ENCODE measurements at regions of chr6 and their contacts with region 1.

Region 1: GRCh38 chr6:16854986-16855385 is 93.7 kb upstream of the ATXN1 start:
- DNase-seq: no peak
- H3K4me3 ChIP-seq: no peak overlapping the region
- H3K4me3 Mint-ChIP-seq: no peak overlapping the region
- H3K27ac ChIP-seq: no peak overlapping the region
- H3K27ac Mint-ChIP-seq: no peak overlapping the region
- H3K4me1 ChIP-seq: peaks cover 30 to 36% of the 10 kb centered on the region in 2 donors
- H3K4me1 Mint-ChIP-seq: peaks cover 37% of the 10 kb centered on the region
- H3K27me3 ChIP-seq: no peaks in the 10 kb centered on the region
- H3K27me3 Mint-ChIP-seq: peaks cover 0 to 2% (median 0%) of the 10 kb centered on the region in 3 donors
- CTCF ChIP-seq: no peak

Region 2: DNA sequence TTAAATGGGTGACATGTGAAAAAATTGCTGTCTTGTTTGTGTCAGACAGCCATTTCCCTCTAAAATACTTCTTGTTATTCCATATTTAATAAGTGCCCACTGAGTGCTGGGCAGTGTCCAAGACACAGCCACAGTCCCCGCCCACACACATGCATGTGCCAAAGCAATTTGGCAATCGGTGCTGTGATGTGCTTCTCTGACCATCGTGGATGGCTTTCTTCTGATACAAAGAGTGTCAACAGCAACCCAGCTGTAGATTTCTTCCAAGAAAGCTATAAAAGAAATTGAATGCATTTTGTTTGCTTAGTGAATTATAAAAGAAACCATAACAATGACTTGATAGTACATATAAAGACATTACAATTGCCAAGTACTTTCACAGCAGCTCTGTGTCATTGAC is 46.8 kb after region 1 on chr6:
- intact Hi-C with region 1: loop called in 1 of 2 experiments (anchors 10 kb)
- DNase-seq: peak; percentile 14 to 59 (median 32)
- H3K4me3 ChIP-seq: peak overlapping the region in 1 of 3 experiments; percentile 18
- H3K4me3 Mint-ChIP-seq: no peak overlapping the region
- H3K27ac ChIP-seq: peak overlapping the region in 1 of 2 donors; percentile 28
- H3K27ac Mint-ChIP-seq: peak overlapping the region in 4 of 7 donors; percentile 6 to 83 (median 43)
- H3K4me1 ChIP-seq: peaks cover 33 to 40% of the 10 kb centered on the region in 2 donors
- H3K4me1 Mint-ChIP-seq: peaks cover 35% of the 10 kb centered on the region
- H3K27me3 ChIP-seq: no peaks in the 10 kb centered on the region
- H3K27me3 Mint-ChIP-seq: peaks cover 0 to 5% (median under 1%) of the 10 kb centered on the region in 3 donors
- CTCF ChIP-seq: no peak

Measured in CD14-positive monocyte (primary cell).